ENCODE measurements at regions of chr6 and their contacts with region 1.

Region 1: GRCh38 chr6:152068622-152069261 is 261.3 kb downstream of the ESR1 start:
- DNase-seq: no peak
- ATAC-seq: no peak
- H3K4me3 ChIP-seq: no peak overlapping the region
- H3K4me3 Mint-ChIP-seq: no peak overlapping the region
- H3K27ac ChIP-seq: no peak overlapping the region
- H3K27ac Mint-ChIP-seq: no peak overlapping the region
- H3K4me1 ChIP-seq: no peaks in the 10 kb centered on the region
- H3K4me1 Mint-ChIP-seq: no peaks in the 10 kb centered on the region
- H3K27me3 ChIP-seq: no peaks in the 10 kb centered on the region
- H3K27me3 Mint-ChIP-seq: no peaks in the 10 kb centered on the region
- CTCF ChIP-seq: no peak

Region 2: DNA sequence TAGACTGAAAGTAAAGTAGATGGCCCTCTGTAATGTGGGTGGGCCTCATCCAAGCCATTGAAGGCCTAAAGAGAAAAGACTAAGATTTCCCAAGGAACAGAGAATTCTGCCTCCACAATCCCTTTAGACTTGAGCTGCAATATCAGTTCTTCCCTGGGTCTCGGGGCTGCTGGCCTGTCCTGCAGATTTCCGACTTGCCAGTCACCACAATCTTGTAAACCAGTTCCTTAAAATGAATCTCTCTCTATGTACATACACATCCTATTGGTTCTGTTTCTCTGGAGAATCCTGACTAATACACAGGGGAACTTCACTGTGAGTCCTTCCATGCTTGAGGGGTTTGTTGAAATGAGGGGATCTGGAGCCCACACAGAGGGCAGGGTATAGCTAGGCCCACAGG is 562.0 kb before region 1 on chr6:
- CTCF ChIA-PET with region 1: no interaction called
- POLR2A ChIA-PET with region 1: no interaction called
- intact Hi-C with region 1: loop called in 1 of 2 experiments (anchors 10 kb)
- DNase-seq: no peak
- ATAC-seq: no peak
- H3K4me3 ChIP-seq: no peak overlapping the region
- H3K4me3 Mint-ChIP-seq: no peak overlapping the region
- H3K27ac ChIP-seq: no peak overlapping the region
- H3K27ac Mint-ChIP-seq: no peak overlapping the region
- H3K4me1 ChIP-seq: no peaks in the 10 kb centered on the region
- H3K4me1 Mint-ChIP-seq: no peaks in the 10 kb centered on the region
- H3K27me3 ChIP-seq: no peaks in the 10 kb centered on the region
- H3K27me3 Mint-ChIP-seq: peaks cover 6% of the 10 kb centered on the region
- CTCF ChIP-seq: no peak

Region 3: GRCh38 chr6:152176268-152176667 is 107.5 kb after region 1 on chr6:
- CTCF ChIA-PET with region 1: no interaction called
- POLR2A ChIA-PET with region 1: no interaction called
- intact Hi-C with region 1: no loop called
- DNase-seq: no peak
- ATAC-seq: no peak
- H3K4me3 ChIP-seq: no peak overlapping the region
- H3K4me3 Mint-ChIP-seq: no peak overlapping the region
- H3K27ac ChIP-seq: no peak overlapping the region
- H3K27ac Mint-ChIP-seq: peak overlapping the region; percentile 74
- H3K4me1 ChIP-seq: peaks cover 22% of the 10 kb centered on the region
- H3K4me1 Mint-ChIP-seq: peaks cover 60% of the 10 kb centered on the region
- H3K27me3 ChIP-seq: no peaks in the 10 kb centered on the region
- H3K27me3 Mint-ChIP-seq: no peaks in the 10 kb centered on the region
- CTCF ChIP-seq: no peak